OCI-LY7 (cell line): ENCODE measurements at regions of chr11 and their contacts with region 1.

Region 1: DNA sequence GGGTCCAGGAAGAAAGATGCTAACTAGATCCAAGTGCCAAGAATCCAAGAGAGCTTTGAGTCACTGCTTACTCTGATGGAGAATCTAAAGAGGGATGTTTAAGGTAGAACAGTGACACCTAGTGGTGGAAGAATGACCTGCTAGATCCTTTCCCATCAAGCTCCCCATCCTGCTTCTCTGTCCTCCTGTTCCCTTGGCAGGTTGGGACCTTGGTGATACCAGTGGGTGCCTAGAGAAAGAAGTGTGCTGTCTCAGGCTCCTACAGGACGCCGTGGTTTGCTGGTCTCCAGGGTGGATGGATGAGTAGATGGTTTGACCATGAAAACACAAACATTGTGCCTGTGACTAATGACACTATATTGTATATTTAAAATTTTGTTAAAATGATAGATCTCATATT is 383.7 kb downstream of the TMEM135 start:
- DNase-seq: peak; percentile 82
- H3K4me3 ChIP-seq: no peak overlapping the region
- H3K27ac ChIP-seq: no peak overlapping the region
- H3K4me1 ChIP-seq: peaks cover 33% of the 10 kb centered on the region
- CTCF ChIP-seq: peak; percentile 83

Region 2: GRCh38 chr11:86938900-86939880 is 482.2 kb before region 1 on chr11:
- CTCF ChIA-PET with region 1: no interaction called
- POLR2A ChIA-PET with region 1: no interaction called
- intact Hi-C with region 1: loop called (anchors 1 kb)
- DNase-seq: peak; percentile 62
- H3K4me3 ChIP-seq: no peak overlapping the region
- H3K27ac ChIP-seq: no peak overlapping the region
- H3K4me1 ChIP-seq: no peaks in the 10 kb centered on the region
- CTCF ChIP-seq: peak; percentile 80

Region 3: GRCh38 chr11:87359401-87359800 is 62.0 kb before region 1 on chr11:
- CTCF ChIA-PET with region 1: interaction called, 42 read pairs
- POLR2A ChIA-PET with region 1: interaction called, 8 read pairs
- intact Hi-C with region 1: no loop called
- DNase-seq: peak; percentile 89
- H3K4me3 ChIP-seq: peak overlapping the region; percentile 65
- H3K27ac ChIP-seq: peak overlapping the region; percentile 92
- H3K4me1 ChIP-seq: peaks cover 95% of the 10 kb centered on the region
- CTCF ChIP-seq: no peak

Region 4: GRCh38 chr11:87548797-87549196 is 127.4 kb after region 1 on chr11:
- CTCF ChIA-PET with region 1: no interaction called
- POLR2A ChIA-PET with region 1: no interaction called
- intact Hi-C with region 1: no loop called
- DNase-seq: no peak
- H3K4me3 ChIP-seq: no peak overlapping the region
- H3K27ac ChIP-seq: no peak overlapping the region
- H3K4me1 ChIP-seq: no peaks in the 10 kb centered on the region
- CTCF ChIP-seq: no peak